CD4-positive, alpha-beta T cell (primary cell): ENCODE measurements at regions of chr5 and their contacts with region 1.

Region 1: DNA sequence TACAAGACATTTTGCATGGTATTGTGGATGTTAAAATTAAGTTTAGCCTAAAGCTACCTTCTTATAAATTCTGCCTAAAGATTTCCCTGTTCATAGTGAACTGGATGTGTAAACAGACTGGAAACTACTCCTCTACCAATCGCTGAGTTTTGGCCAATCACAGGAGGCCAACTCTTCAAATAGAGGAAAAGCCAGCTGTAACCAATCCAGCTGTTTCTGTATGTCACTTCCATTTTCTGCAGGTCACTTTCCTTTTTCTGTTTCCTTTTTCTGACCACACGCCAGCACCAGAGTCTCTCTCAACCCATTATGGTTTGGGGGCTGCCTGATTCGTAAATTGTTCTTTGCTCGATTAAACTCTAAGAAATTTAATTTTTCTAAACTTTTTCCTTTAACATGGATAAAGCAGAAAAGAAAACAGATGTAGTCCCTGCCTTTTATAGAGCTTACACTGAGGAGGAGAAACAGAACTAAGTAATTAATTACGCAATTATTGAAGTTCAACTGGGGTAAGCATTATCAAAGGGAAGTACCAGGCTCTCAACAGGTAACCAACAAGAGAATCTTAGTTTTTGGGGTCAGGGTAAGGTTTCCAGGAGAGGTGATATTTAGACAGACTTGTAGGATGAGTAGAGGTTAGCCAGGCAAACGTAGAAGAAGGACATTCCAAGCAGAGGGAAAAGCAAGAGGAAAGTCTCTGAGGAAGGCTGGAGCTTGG is 27.7 kb downstream of the RANBP3L start:
- DNase-seq: peak in 2 of 14 experiments; percentile 7 to 10
- ATAC-seq: no peak
- H3K4me3 ChIP-seq: no peak overlapping the region
- H3K4me3 Mint-ChIP-seq: no peak overlapping the region
- H3K27ac ChIP-seq: no peak overlapping the region
- H3K27ac Mint-ChIP-seq: no peak overlapping the region
- H3K4me1 ChIP-seq: no peaks in the 10 kb centered on the region
- H3K4me1 Mint-ChIP-seq: no peaks in the 10 kb centered on the region
- H3K27me3 ChIP-seq: no peaks in the 10 kb centered on the region
- H3K27me3 Mint-ChIP-seq: peaks cover 20% of the 10 kb centered on the region
- CTCF ChIP-seq: no peak

Region 2: GRCh38 chr5:35694481-35694880 is 579.5 kb before region 1 on chr5:
- CTCF ChIA-PET with region 1: no interaction called
- POLR2A ChIA-PET with region 1: no interaction called
- intact Hi-C with region 1: no loop called
- DNase-seq: no peak
- ATAC-seq: no peak
- H3K4me3 ChIP-seq: no peak overlapping the region
- H3K4me3 Mint-ChIP-seq: no peak overlapping the region
- H3K27ac ChIP-seq: no peak overlapping the region
- H3K27ac Mint-ChIP-seq: no peak overlapping the region
- H3K4me1 ChIP-seq: no peaks in the 10 kb centered on the region
- H3K4me1 Mint-ChIP-seq: no peaks in the 10 kb centered on the region
- H3K27me3 ChIP-seq: no peaks in the 10 kb centered on the region
- H3K27me3 Mint-ChIP-seq: no peaks in the 10 kb centered on the region
- CTCF ChIP-seq: no peak

Region 3: GRCh38 chr5:36690041-36690961 is 416.3 kb after region 1 on chr5:
- CTCF ChIA-PET with region 1: no interaction called
- POLR2A ChIA-PET with region 1: no interaction called
- intact Hi-C with region 1: loop called (anchors 5 kb)
- DNase-seq: peak; percentile 39 to 79 (median 50)
- ATAC-seq: peak; percentile 90
- H3K4me3 ChIP-seq: peak overlapping the region; percentile 50
- H3K4me3 Mint-ChIP-seq: peak overlapping the region; percentile 87
- H3K27ac ChIP-seq: no peak overlapping the region
- H3K27ac Mint-ChIP-seq: no peak overlapping the region
- H3K4me1 ChIP-seq: peaks cover 14% of the 10 kb centered on the region
- H3K4me1 Mint-ChIP-seq: peaks cover 12% of the 10 kb centered on the region
- H3K27me3 ChIP-seq: peaks cover 9 to 14% of the 10 kb centered on the region in 2 experiments
- H3K27me3 Mint-ChIP-seq: peaks cover 50% of the 10 kb centered on the region
- CTCF ChIP-seq: peak; percentile 76

Region 4: DNA sequence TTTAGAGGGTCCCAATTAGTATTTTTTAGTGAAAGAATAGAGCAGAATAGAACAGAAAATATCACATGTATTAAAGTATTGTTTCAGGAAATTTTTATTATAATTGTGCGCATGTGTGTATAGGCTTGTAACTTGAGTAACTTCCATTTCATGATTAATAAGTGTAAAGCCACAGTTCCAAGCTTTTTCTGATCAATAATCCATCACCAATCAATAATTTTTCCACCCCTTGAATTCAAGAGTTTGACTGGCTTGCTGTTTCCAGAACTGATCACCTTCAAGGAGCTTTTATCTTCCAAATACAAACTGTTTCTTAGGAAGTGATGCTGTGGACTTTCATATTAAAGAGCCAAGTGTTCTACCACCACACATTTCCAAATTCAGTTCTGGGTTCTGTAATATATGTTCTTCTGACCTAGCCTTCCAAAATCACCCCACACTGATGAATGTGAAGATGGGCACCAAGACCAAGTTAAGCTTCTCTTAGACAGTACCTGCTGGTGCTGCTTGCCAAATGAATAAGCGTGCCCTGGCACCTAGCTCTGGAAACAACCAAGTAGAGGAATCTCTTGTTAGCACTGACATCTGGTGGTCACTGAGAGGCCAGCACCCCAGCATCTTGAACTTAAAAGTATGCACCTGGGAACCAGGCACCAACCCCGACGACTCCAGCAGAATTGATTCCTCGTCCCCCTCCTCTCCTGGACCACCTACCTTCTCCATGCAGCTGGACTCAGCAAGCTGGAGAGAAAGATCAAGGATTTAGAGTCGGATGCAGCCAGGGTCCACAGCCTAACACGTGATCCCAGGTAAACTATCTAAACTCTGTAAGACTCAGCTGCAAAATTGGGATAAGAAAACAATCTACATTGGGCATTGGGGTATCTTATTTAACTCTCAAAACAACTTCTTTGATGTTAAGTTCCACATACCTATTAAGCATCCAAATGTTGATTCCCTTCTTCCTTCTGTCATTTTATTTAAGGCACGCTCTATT is 422.0 kb after region 1 on chr5:
- CTCF ChIA-PET with region 1: no interaction called
- POLR2A ChIA-PET with region 1: no interaction called
- intact Hi-C with region 1: loop called (anchors 5 kb)
- DNase-seq: peak in 12 of 14 experiments; percentile 5 to 55 (median 20)
- ATAC-seq: peak; percentile 61
- H3K4me3 ChIP-seq: no peak overlapping the region
- H3K4me3 Mint-ChIP-seq: no peak overlapping the region
- H3K27ac ChIP-seq: no peak overlapping the region
- H3K27ac Mint-ChIP-seq: no peak overlapping the region
- H3K4me1 ChIP-seq: peaks cover 11% of the 10 kb centered on the region
- H3K4me1 Mint-ChIP-seq: no peaks in the 10 kb centered on the region
- H3K27me3 ChIP-seq: peaks cover 9 to 14% of the 10 kb centered on the region in 2 experiments
- H3K27me3 Mint-ChIP-seq: peaks cover 36% of the 10 kb centered on the region
- CTCF ChIP-seq: peak; percentile 63

Region 5: GRCh38 chr5:37615184-37615583 is 1341.2 kb after region 1 on chr5:
- CTCF ChIA-PET with region 1: no interaction called
- POLR2A ChIA-PET with region 1: no interaction called
- intact Hi-C with region 1: no loop called
- DNase-seq: no peak
- ATAC-seq: no peak
- H3K4me3 ChIP-seq: no peak overlapping the region
- H3K4me3 Mint-ChIP-seq: no peak overlapping the region
- H3K27ac ChIP-seq: no peak overlapping the region
- H3K27ac Mint-ChIP-seq: no peak overlapping the region
- H3K4me1 ChIP-seq: no peaks in the 10 kb centered on the region
- H3K4me1 Mint-ChIP-seq: no peaks in the 10 kb centered on the region
- H3K27me3 ChIP-seq: no peaks in the 10 kb centered on the region
- H3K27me3 Mint-ChIP-seq: no peaks in the 10 kb centered on the region
- CTCF ChIP-seq: no peak